CD4-positive, alpha-beta T cell (primary cell): ENCODE measurements at regions of chrX and their contacts with region 1.

Region 1: GRCh38 chrX:153573984-153574383 is 25.0 kb downstream of the CCNQ start:
- DNase-seq: peak in 1 of 14 experiments; percentile 17
- ATAC-seq: no peak
- H3K4me3 ChIP-seq: no peak overlapping the region
- H3K4me3 Mint-ChIP-seq: no peak overlapping the region
- H3K27ac ChIP-seq: no peak overlapping the region
- H3K27ac Mint-ChIP-seq: no peak overlapping the region
- H3K4me1 ChIP-seq: no peaks in the 10 kb centered on the region
- H3K4me1 Mint-ChIP-seq: peaks cover 4% of the 10 kb centered on the region
- H3K27me3 ChIP-seq: no peaks in the 10 kb centered on the region
- H3K27me3 Mint-ChIP-seq: no peaks in the 10 kb centered on the region
- CTCF ChIP-seq: no peak

Region 2: DNA sequence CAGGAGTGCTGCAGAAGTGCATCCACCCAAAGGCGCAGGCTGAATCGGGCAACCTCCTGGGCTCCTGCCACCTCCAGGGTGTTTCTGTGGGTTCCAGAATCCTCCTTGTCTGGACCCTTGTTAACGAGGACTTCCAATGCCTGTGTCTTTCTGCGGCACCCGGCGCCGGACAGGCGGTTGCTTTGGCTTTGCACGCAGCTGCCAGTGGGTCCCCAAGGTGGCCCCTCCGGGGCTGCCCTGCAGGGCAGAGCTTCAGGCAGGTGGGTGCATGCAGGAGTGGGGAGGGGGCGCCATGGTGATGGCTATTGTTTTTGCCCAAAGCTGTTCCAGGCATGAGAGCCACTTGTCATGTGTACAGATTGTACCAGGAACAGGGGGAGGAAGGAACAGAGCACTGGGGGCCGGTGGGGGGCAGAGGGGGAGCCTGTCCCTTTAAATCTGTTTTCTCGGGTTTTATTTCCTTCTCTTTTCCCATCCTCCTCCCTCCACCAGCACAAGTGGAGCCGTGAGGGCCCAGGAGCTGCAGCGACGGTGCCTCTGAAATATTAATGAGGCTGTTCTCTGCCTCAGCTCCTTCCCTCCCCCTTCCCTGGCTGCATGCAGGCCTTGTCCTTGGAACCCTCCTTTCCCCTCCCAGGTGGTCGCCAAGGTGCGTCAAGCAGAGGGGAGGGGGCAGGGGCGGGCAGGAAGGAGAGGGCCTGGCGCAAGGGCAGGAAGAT is 43.4 kb before region 1 on chrX:
- CTCF ChIA-PET with region 1: no interaction called
- POLR2A ChIA-PET with region 1: no interaction called
- intact Hi-C with region 1: no loop called
- DNase-seq: no peak
- ATAC-seq: no peak
- H3K4me3 ChIP-seq: no peak overlapping the region
- H3K4me3 Mint-ChIP-seq: no peak overlapping the region
- H3K27ac ChIP-seq: no peak overlapping the region
- H3K27ac Mint-ChIP-seq: no peak overlapping the region
- H3K4me1 ChIP-seq: no peaks in the 10 kb centered on the region
- H3K4me1 Mint-ChIP-seq: no peaks in the 10 kb centered on the region
- H3K27me3 ChIP-seq: no peaks in the 10 kb centered on the region
- H3K27me3 Mint-ChIP-seq: peaks cover 3% of the 10 kb centered on the region
- CTCF ChIP-seq: no peak

Region 3: DNA sequence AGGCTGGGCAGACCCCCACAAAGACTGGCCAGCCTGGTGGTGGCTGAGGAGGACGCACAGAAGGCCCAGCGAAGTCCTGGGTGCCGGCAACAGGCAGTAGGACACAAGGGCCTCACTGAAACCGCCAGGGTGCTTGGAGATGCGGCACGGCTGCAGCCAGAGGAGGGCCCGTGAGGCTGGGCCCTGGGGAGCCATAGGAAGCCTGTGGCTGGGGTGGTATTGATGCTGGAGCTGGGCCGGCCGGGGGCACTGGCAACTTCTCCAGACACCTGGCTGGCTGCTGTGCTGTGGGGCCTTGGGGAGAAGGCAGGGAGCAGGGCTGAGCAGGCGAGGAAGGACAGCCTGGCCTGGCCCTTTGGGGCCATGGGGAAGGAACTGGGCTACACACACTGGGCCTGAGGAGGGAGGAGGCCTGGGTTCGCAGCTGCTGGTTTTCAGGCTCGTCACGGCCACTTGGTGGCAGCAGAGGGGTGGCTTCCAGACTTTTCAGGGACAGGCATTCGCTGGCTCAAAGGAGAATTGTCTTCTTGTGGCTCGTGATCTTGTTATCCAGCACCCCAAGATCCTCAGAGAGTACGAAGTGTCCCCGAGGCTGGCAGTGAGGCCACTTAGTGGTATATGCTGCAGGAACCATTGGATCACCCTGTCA is 19.3 kb before region 1 on chrX:
- CTCF ChIA-PET with region 1: no interaction called
- POLR2A ChIA-PET with region 1: no interaction called
- intact Hi-C with region 1: no loop called
- DNase-seq: peak; percentile 40 to 76 (median 54)
- ATAC-seq: peak; percentile 68
- H3K4me3 ChIP-seq: no peak overlapping the region
- H3K4me3 Mint-ChIP-seq: no peak overlapping the region
- H3K27ac ChIP-seq: no peak overlapping the region
- H3K27ac Mint-ChIP-seq: no peak overlapping the region
- H3K4me1 ChIP-seq: peaks cover 2% of the 10 kb centered on the region
- H3K4me1 Mint-ChIP-seq: no peaks in the 10 kb centered on the region
- H3K27me3 ChIP-seq: peaks cover 0 to 2% of the 10 kb centered on the region in 2 experiments
- H3K27me3 Mint-ChIP-seq: no peaks in the 10 kb centered on the region
- CTCF ChIP-seq: peak; percentile 46

Region 4: GRCh38 chrX:153627675-153628111 is 53.7 kb after region 1 on chrX:
- CTCF ChIA-PET with region 1: no interaction called
- POLR2A ChIA-PET with region 1: no interaction called
- intact Hi-C with region 1: loop called in 1 of 2 experiments (anchors 5 kb)
- DNase-seq: no peak
- ATAC-seq: no peak
- H3K4me3 ChIP-seq: no peak overlapping the region
- H3K4me3 Mint-ChIP-seq: no peak overlapping the region
- H3K27ac ChIP-seq: no peak overlapping the region
- H3K27ac Mint-ChIP-seq: no peak overlapping the region
- H3K4me1 ChIP-seq: no peaks in the 10 kb centered on the region
- H3K4me1 Mint-ChIP-seq: no peaks in the 10 kb centered on the region
- H3K27me3 ChIP-seq: no peaks in the 10 kb centered on the region
- H3K27me3 Mint-ChIP-seq: no peaks in the 10 kb centered on the region
- CTCF ChIP-seq: no peak

Region 5: DNA sequence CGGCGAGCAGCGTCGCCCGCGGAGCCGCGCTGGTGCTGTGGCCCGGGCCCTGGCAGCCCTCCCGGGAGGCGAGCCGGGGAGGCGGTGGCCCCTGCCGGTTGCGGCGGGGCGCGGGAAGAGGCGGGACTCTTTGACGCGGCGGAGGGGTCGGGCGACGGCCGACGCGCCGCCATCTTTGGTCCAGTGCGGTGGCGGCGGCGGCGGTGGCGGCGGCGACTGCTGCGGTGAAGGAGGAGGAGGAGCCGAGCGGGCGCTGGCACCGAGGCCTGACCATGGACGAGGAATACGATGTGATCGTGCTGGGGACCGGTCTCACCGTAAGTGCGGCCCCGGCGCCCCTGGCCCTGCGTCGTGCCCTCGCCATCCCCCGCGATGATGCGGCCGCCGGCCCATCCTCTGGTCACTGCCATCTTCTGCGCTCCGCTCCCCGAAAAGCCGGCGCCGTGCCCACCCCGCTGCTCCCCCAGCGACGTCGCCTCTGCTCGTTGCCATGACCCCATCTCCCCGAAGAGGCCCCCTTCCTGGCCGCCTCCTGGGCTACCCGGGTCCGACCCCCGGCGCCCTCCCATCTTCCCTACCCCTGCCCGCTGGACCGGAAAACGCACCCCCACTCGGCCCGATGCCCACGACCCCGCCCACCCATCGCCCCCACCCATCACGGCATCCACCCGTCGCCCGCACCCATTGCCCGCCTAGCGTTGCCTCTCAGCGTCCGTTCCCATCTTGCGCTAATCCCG is 863.2 kb after region 1 on chrX and contains the start of gene GDI1:
- CTCF ChIA-PET with region 1: no interaction called
- POLR2A ChIA-PET with region 1: no interaction called
- intact Hi-C with region 1: no loop called
- DNase-seq: peak; percentile 30 to 81 (median 50)
- ATAC-seq: peak; percentile 54
- H3K4me3 ChIP-seq: peak within 1 kb of the TSS; percentile 59
- H3K4me3 Mint-ChIP-seq: peak within 1 kb of the TSS; percentile 90
- H3K27ac ChIP-seq: peak within 1 kb of the TSS; percentile 64 to 72
- H3K27ac Mint-ChIP-seq: peak within 1 kb of the TSS; percentile 93
- H3K4me1 ChIP-seq: peaks cover 45% of the 10 kb centered on the region
- H3K4me1 Mint-ChIP-seq: peaks cover 12% of the 10 kb centered on the region
- H3K27me3 ChIP-seq: no peaks in the 10 kb centered on the region
- H3K27me3 Mint-ChIP-seq: no peaks in the 10 kb centered on the region
- CTCF ChIP-seq: no peak
- total RNA-seq, gene GDI1: 144 to 145 TPM